CD8-positive, alpha-beta T cell (primary cell): ENCODE measurements at regions of chr2 and their contacts with region 1.

Region 1: GRCh38 chr2:109005686-109006204 is 16.7 kb upstream of the EDAR start:
- DNase-seq: no peak
- ATAC-seq: no peak
- H3K4me3 ChIP-seq: no peak overlapping the region
- H3K4me3 Mint-ChIP-seq: no peak overlapping the region
- H3K27ac ChIP-seq: no peak overlapping the region
- H3K27ac Mint-ChIP-seq: no peak overlapping the region
- H3K4me1 ChIP-seq: peaks cover 13% of the 10 kb centered on the region
- H3K4me1 Mint-ChIP-seq: peaks cover 32% of the 10 kb centered on the region
- H3K27me3 ChIP-seq: no peaks in the 10 kb centered on the region
- H3K27me3 Mint-ChIP-seq: no peaks in the 10 kb centered on the region
- CTCF ChIP-seq: no peak

Region 2: DNA sequence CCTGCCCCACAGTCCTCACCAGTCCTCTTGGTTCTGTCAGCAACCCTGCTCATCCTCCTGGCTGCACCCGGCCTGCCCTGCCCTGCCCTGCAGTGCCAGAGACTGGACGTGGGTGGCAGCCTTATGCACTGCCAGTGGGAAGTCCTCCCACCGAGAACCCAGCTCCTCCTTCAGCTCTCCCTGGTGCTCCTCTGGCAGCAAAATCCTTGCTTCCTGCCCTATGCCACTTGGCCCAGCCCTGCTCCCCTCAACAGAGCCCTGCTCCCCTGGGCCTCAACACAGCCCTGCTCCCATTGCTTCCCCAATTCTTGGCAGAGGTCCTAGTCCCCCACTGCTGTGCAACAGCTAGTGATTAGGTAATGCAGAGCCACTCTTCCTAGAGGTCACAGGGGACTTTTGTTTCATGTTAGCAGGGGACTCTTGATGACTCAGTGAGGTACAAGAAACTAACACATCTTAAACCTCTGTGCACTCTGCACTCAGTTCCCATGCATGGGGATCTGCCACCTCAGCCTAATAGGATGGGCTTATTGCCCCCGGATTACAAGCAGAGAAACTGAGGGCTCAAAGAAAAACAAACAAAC is 41.3 kb after region 1 on chr2:
- CTCF ChIA-PET with region 1: no interaction called
- POLR2A ChIA-PET with region 1: no interaction called
- intact Hi-C with region 1: loop called in 1 of 2 experiments (anchors 5 kb)
- DNase-seq: no peak
- ATAC-seq: no peak
- H3K4me3 ChIP-seq: no peak overlapping the region
- H3K4me3 Mint-ChIP-seq: peak overlapping the region; percentile 38
- H3K27ac ChIP-seq: no peak overlapping the region
- H3K27ac Mint-ChIP-seq: no peak overlapping the region
- H3K4me1 ChIP-seq: peaks cover 16% of the 10 kb centered on the region
- H3K4me1 Mint-ChIP-seq: peaks cover 36% of the 10 kb centered on the region
- H3K27me3 ChIP-seq: no peaks in the 10 kb centered on the region
- H3K27me3 Mint-ChIP-seq: no peaks in the 10 kb centered on the region
- CTCF ChIP-seq: no peak

Region 3: DNA sequence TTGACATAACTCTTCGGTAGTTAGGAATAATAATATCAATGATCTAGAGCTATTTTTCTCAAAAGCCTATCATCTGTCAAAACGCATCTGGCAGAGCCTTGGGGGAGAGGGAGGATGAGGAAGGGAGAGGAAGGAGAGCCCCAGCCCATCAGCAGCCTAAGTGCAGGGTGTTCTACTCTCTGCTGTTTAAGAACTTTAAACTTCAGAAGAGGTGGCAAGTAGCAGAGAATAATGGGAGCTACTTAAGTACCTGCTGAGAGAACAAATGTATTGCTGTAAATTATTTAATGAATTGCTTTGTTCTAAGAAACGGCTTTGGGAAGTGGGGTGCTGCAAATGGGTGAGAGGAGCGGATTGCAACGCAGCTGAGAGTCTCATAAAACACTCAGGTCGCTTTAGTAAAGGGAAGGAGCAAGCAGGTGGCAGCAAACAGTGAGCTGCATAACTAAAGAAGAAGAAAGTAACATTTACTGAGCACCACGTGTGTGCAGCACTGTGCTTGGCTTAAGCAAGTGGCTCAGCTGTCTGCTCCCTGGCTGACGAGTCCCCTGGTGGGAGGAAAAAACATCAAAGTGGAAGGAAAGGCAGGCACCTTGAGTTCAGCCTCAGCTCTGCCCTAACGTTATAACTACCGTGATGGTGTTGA is 97.0 kb after region 1 on chr2:
- CTCF ChIA-PET with region 1: no interaction called
- POLR2A ChIA-PET with region 1: no interaction called
- intact Hi-C with region 1: no loop called
- DNase-seq: peak in 5 of 9 experiments; percentile 20 to 50 (median 28)
- ATAC-seq: peak; percentile 48
- H3K4me3 ChIP-seq: no peak overlapping the region
- H3K4me3 Mint-ChIP-seq: peak overlapping the region; percentile 57
- H3K27ac ChIP-seq: no peak overlapping the region
- H3K27ac Mint-ChIP-seq: peak overlapping the region; percentile 69
- H3K4me1 ChIP-seq: peaks cover 12% of the 10 kb centered on the region
- H3K4me1 Mint-ChIP-seq: peaks cover 28% of the 10 kb centered on the region
- H3K27me3 ChIP-seq: no peaks in the 10 kb centered on the region
- H3K27me3 Mint-ChIP-seq: no peaks in the 10 kb centered on the region
- CTCF ChIP-seq: no peak